ENCODE measurements at regions of chr9 and their contacts with region 1.

Region 1: GRCh38 chr9:126398403-126399058 is 71.9 kb downstream of the MVB12B start:
- DNase-seq: peak; percentile 69
- H3K4me3 ChIP-seq: no peak overlapping the region
- H3K27ac ChIP-seq: no peak overlapping the region
- H3K4me1 ChIP-seq: peaks cover 7% of the 10 kb centered on the region
- H3K27me3 ChIP-seq: no peaks in the 10 kb centered on the region
- CTCF ChIP-seq: peak; percentile 89 to 97 (median 93)
- POLR2A ChIP-seq: no peak

Region 2: DNA sequence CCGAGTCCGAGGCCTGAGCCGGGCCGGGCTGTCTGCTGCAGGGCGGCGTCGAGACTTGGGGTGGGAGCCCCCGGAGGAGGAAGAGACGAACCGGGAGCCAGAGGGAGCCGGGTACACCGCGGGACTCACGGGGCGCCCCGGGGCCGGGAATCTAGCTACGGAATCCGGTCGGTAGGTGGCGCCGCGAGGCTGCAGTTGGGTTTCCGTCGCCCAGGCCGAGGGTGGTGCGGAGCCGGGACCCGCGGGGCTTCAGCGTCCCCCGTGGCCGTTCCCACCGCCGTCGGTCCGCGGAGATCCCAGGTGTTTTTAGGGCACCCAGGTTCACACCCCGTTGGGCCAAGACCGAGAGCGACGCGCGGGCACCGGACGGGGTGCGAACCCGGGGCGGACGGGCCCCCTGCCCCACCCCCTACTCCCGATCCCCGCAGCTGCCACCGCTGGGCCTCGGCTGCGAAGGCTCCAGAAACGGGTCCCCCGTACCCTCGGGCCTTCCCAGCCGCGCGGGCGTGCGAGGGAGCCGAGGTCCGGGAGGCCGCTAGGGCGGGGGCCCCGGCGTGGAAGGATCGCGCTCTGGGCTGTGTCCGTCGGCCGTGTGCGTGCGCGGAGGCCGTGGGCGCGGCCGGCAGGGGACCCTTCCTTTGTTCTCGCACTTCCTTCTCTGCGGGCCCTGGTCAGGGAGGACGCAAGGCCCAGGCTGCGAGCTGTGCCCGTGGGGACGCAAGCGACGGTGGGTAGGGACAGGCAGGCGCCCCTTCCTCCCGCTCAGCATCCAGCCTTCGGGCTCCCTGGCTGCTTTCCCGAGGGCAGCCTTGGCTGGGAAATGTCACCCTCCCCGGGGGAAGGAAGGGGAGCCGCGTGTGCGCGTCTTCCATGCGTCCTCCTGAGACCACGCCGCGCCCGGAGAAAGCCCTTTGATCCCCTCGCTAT is 990.3 kb before region 1 on chr9:
- intact Hi-C with region 1: loop called (anchors 10 kb)
- DNase-seq: peak; percentile 61
- H3K4me3 ChIP-seq: peak overlapping the region; percentile 49 to 54
- H3K27ac ChIP-seq: peak overlapping the region; percentile 38 to 67
- H3K4me1 ChIP-seq: peaks cover 2% of the 10 kb centered on the region
- H3K27me3 ChIP-seq: no peaks in the 10 kb centered on the region
- CTCF ChIP-seq: peak; percentile 79 to 89 (median 84)
- POLR2A ChIP-seq: no peak

Region 3: GRCh38 chr9:125558453-125559092 is 840.0 kb before region 1 on chr9:
- intact Hi-C with region 1: loop called (anchors 10 kb)
- DNase-seq: peak; percentile 59
- H3K4me3 ChIP-seq: no peak overlapping the region
- H3K27ac ChIP-seq: no peak overlapping the region
- H3K4me1 ChIP-seq: no peaks in the 10 kb centered on the region
- H3K27me3 ChIP-seq: no peaks in the 10 kb centered on the region
- CTCF ChIP-seq: peak; percentile 41 to 74 (median 64)
- POLR2A ChIP-seq: no peak

Region 4: GRCh38 chr9:126228781-126229444 is 169.6 kb before region 1 on chr9:
- intact Hi-C with region 1: loop called (anchors 10 kb)
- DNase-seq: peak; percentile 63
- H3K4me3 ChIP-seq: no peak overlapping the region
- H3K27ac ChIP-seq: no peak overlapping the region
- H3K4me1 ChIP-seq: no peaks in the 10 kb centered on the region
- H3K27me3 ChIP-seq: no peaks in the 10 kb centered on the region
- CTCF ChIP-seq: peak; percentile 68 to 93 (median 85)
- POLR2A ChIP-seq: no peak

Region 5: GRCh38 chr9:126301985-126302603 is 96.4 kb before region 1 on chr9:
- intact Hi-C with region 1: loop called (anchors 5 kb)
- DNase-seq: peak; percentile 56
- H3K4me3 ChIP-seq: no peak overlapping the region
- H3K27ac ChIP-seq: no peak overlapping the region
- H3K4me1 ChIP-seq: no peaks in the 10 kb centered on the region
- H3K27me3 ChIP-seq: no peaks in the 10 kb centered on the region
- CTCF ChIP-seq: peak; percentile 13 to 73 (median 68)
- POLR2A ChIP-seq: no peak

Region 6: DNA sequence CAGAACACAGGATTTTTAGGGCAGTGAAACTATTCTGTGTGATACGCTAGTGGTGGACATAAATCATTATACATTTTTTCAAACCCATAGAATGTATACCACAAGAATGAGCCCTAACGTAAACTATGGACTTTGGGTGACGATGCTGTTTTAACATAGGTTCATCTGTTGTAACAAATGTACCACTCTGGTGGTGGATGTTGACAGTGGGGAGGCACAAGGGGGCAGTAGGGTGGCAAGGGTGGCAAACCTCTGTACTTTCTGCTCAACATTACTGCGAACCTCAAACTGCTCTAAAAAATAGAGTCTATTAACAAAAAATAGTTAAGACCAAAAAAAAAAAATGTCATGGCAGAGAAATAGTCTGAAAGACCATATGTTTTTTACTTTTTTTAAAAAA is 81.0 kb before region 1 on chr9:
- intact Hi-C with region 1: loop called (anchors 5 kb)
- DNase-seq: no peak
- H3K4me3 ChIP-seq: no peak overlapping the region
- H3K27ac ChIP-seq: no peak overlapping the region
- H3K4me1 ChIP-seq: no peaks in the 10 kb centered on the region
- H3K27me3 ChIP-seq: no peaks in the 10 kb centered on the region
- CTCF ChIP-seq: peak in 3 of 4 experiments; percentile 22 to 53 (median 50)
- POLR2A ChIP-seq: no peak

Region 7: GRCh38 chr9:126490871-126491567 is 92.5 kb after region 1 on chr9:
- intact Hi-C with region 1: loop called (anchors 5 kb)
- DNase-seq: peak; percentile 58
- H3K4me3 ChIP-seq: no peak overlapping the region
- H3K27ac ChIP-seq: no peak overlapping the region
- H3K4me1 ChIP-seq: no peaks in the 10 kb centered on the region
- H3K27me3 ChIP-seq: no peaks in the 10 kb centered on the region
- CTCF ChIP-seq: peak; percentile 84 to 96 (median 92)
- POLR2A ChIP-seq: no peak

Measured in prostate gland (tissue), 2 donors.